Panc1 (cell line): ENCODE measurements at regions of chr21 and their contacts with region 1.

Region 1: GRCh38 chr21:34889716-34890469 is 159.2 kb downstream of the RUNX1 start:
- DNase-seq: no peak
- ATAC-seq: peak; percentile 70
- H3K4me3 ChIP-seq: peak overlapping the region; percentile 63 to 65
- H3K27ac ChIP-seq: peak overlapping the region; percentile 63; the same call in 1 of the 2 replicates
- H3K4me1 ChIP-seq: no peaks in the 10 kb centered on the region; the same call in 1 of the 2 replicates
- H3K27me3 ChIP-seq: 0 out of 2 replicates have a peak, but pooled peaks cover 2% of the 10 kb centered on the region
- CTCF ChIP-seq: peak; percentile 91

Region 2: DNA sequence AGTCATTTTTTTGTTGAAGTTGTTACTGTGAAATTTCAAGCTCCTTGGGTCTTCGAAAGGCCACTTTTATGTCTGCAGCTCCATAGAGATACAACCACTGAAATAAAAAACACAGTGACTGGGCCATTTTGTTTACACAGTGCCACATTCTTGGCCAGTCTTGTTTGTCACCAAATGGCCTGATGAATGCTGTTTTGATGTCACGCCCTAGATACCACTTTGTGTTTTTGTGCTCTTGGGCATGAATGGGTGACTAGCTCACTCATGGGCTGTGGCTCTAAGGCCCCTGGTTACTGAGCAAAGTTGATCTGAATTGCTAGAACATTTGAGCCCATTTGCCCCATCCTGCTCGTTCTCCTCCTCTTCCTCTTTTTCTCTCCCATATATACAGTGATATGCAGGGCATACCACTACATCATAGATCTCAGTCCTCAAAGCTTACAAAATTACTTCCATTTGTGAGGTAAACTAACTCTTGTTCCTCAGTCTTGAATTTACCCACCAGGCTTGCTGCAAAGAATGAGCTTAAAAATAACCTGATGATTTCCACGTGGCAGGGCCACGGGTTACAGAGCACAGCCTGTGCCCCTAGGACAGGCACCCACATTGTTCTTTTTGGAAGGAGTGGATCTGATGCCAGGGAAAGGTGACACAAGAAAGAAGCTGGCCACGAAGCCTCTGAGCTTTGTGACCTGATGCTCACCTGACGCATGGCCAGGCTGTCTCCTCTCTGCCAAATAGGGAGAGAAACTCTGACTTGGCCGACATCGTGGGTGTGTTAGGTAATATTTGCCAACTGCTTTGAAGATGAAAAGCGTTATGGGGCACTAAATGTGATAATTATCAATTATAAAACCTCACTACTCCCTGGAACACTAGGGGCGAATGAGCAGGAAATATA is 66.8 kb after region 1 on chr21:
- CTCF ChIA-PET with region 1: no interaction called
- POLR2A ChIA-PET with region 1: no interaction called
- in situ Hi-C with region 1: no loop called
- intact Hi-C with region 1: no loop called
- DNase-seq: no peak
- ATAC-seq: no peak
- H3K4me3 ChIP-seq: no peak overlapping the region
- H3K27ac ChIP-seq: no peak overlapping the region
- H3K4me1 ChIP-seq: no peaks in the 10 kb centered on the region
- H3K27me3 ChIP-seq: no peaks in the 10 kb centered on the region
- CTCF ChIP-seq: no peak

Region 3: GRCh38 chr21:35400233-35400957 is 510.5 kb after region 1 on chr21:
- CTCF ChIA-PET with region 1: interaction called, 3 read pairs
- POLR2A ChIA-PET with region 1: interaction called, 3 read pairs
- in situ Hi-C with region 1: no loop called
- intact Hi-C with region 1: loop called (anchors 2 kb)
- DNase-seq: peak; percentile 75
- ATAC-seq: peak; percentile 92
- H3K4me3 ChIP-seq: no peak overlapping the region
- H3K27ac ChIP-seq: no peak overlapping the region
- H3K4me1 ChIP-seq: 0 out of 2 replicates have a peak, but pooled peaks cover 4% of the 10 kb centered on the region
- H3K27me3 ChIP-seq: no peaks in the 10 kb centered on the region
- CTCF ChIP-seq: peak; percentile 63